T-cell (primary cell): ENCODE measurements at regions of chr1 and their contacts with region 1.

Region 1: GRCh38 chr1:198986036-198986435 is 347.2 kb downstream of the PTPRC start:
- DNase-seq: no peak
- ATAC-seq: no peak
- H3K4me3 ChIP-seq: no peak overlapping the region
- H3K4me3 Mint-ChIP-seq: no peak overlapping the region
- H3K27ac ChIP-seq: no peak overlapping the region
- H3K27ac Mint-ChIP-seq: no peak overlapping the region
- H3K4me1 ChIP-seq: peaks cover 0 to 2% of the 10 kb centered on the region in 2 experiments
- H3K4me1 Mint-ChIP-seq: no peaks in the 10 kb centered on the region
- H3K27me3 ChIP-seq: no peaks in the 10 kb centered on the region
- H3K27me3 Mint-ChIP-seq: no peaks in the 10 kb centered on the region

Region 2: DNA sequence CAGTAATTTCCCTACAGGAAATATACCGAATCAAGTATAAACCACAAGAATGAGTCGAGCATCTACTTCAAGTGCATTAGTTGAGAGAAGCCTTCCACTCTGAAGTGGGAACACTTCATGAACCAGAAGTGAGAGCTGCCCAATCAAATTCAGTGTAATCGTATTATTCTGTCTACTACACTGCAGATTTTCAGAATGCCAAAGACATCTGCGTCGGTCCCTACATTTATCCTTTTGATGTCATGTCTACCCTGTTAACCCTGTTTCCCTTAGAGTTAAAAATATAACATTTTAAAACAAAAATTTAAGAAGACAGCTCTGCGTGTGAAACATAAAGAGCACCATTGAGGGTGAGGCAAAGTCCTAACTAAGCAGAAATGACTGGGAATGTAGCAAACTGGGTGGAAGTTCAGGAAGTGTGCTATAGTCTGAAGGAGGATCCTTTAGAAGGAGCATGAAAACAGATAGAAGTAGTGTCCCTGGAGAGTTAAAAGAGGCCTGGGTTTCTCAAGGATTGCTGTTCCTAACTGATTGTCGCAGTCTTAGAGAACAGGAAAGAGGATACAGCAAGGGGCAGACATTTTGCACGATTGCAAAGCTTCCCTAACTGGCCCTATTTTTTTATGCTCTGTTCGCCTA is 56.0 kb before region 1 on chr1:
- CTCF ChIA-PET with region 1: no interaction called
- POLR2A ChIA-PET with region 1: interaction called in 1 of 2 experiments, 12 read pairs
- DNase-seq: peak in 3 of 35 experiments; percentile 8 to 65 (median 17)
- ATAC-seq: peak; percentile 48 to 88 (median 65)
- H3K4me3 ChIP-seq: peak overlapping the region; percentile 3 to 58
- H3K4me3 Mint-ChIP-seq: peak overlapping the region; percentile 52 to 75 (median 65)
- H3K27ac ChIP-seq: peak overlapping the region; percentile 17
- H3K27ac Mint-ChIP-seq: peak overlapping the region; percentile 35 to 56
- H3K4me1 ChIP-seq: peaks cover under 1 to 73% of the 10 kb centered on the region in 2 experiments
- H3K4me1 Mint-ChIP-seq: peaks cover 43 to 53% (median 50%) of the 10 kb centered on the region in 3 donors
- H3K27me3 ChIP-seq: no peaks in the 10 kb centered on the region
- H3K27me3 Mint-ChIP-seq: no peaks in the 10 kb centered on the region

Region 3: GRCh38 chr1:198967566-198967965 is 18.5 kb before region 1 on chr1:
- CTCF ChIA-PET with region 1: interaction called in 1 of 2 experiments, 18 read pairs
- POLR2A ChIA-PET with region 1: no interaction called
- DNase-seq: no peak
- ATAC-seq: no peak
- H3K4me3 ChIP-seq: no peak overlapping the region
- H3K4me3 Mint-ChIP-seq: peak overlapping the region in 1 of 3 donors; percentile 28
- H3K27ac ChIP-seq: no peak overlapping the region
- H3K27ac Mint-ChIP-seq: no peak overlapping the region
- H3K4me1 ChIP-seq: peaks cover 5 to 17% of the 10 kb centered on the region in 2 experiments
- H3K4me1 Mint-ChIP-seq: peaks cover 26 to 38% (median 26%) of the 10 kb centered on the region in 3 donors
- H3K27me3 ChIP-seq: no peaks in the 10 kb centered on the region
- H3K27me3 Mint-ChIP-seq: no peaks in the 10 kb centered on the region

Region 4: DNA sequence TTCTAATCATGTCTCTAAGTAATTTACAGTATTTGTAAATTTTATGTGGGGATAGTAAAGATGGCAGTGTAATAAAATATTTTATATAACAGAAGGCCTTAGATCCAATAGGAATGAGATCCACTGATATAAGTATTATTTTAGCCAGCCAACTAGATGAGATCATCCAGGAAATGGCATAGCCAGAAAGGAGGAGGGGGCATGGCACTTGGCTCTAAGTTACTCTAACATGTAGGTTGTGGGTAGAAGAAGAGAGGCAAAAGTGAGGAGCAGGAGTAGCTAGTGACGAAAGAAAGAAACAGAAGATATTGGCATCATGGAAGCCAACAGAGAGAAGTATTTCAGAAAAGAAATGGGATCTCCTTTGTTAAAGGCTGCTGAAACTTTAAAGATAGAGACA is 78.9 kb after region 1 on chr1:
- CTCF ChIA-PET with region 1: no interaction called
- POLR2A ChIA-PET with region 1: no interaction called
- DNase-seq: no peak
- ATAC-seq: no peak
- H3K4me3 ChIP-seq: no peak overlapping the region
- H3K4me3 Mint-ChIP-seq: no peak overlapping the region
- H3K27ac ChIP-seq: no peak overlapping the region
- H3K27ac Mint-ChIP-seq: no peak overlapping the region
- H3K4me1 ChIP-seq: peaks cover 0 to 2% of the 10 kb centered on the region in 2 experiments
- H3K4me1 Mint-ChIP-seq: no peaks in the 10 kb centered on the region
- H3K27me3 ChIP-seq: no peaks in the 10 kb centered on the region
- H3K27me3 Mint-ChIP-seq: no peaks in the 10 kb centered on the region